Activated CD4-positive, alpha-beta T cell treated with anti-CD3 and anti-CD28 coated beads, Interleukin-2, amount 10 ng/mL, durations not matched to agents 24 days and 14 days (primary cell): ENCODE measurements at regions of chr6 and their contacts with region 1.

Region 1: GRCh38 chr6:119138906-119139541 is 60.6 kb upstream of the FAM184A start:
- DNase-seq: no peak
- H3K4me3 Mint-ChIP-seq: peak overlapping the region; percentile 46
- H3K27ac Mint-ChIP-seq: peak overlapping the region; percentile 59
- H3K4me1 Mint-ChIP-seq: peaks cover 13% of the 10 kb centered on the region
- H3K27me3 Mint-ChIP-seq: peaks cover 4% of the 10 kb centered on the region

Region 2: DNA sequence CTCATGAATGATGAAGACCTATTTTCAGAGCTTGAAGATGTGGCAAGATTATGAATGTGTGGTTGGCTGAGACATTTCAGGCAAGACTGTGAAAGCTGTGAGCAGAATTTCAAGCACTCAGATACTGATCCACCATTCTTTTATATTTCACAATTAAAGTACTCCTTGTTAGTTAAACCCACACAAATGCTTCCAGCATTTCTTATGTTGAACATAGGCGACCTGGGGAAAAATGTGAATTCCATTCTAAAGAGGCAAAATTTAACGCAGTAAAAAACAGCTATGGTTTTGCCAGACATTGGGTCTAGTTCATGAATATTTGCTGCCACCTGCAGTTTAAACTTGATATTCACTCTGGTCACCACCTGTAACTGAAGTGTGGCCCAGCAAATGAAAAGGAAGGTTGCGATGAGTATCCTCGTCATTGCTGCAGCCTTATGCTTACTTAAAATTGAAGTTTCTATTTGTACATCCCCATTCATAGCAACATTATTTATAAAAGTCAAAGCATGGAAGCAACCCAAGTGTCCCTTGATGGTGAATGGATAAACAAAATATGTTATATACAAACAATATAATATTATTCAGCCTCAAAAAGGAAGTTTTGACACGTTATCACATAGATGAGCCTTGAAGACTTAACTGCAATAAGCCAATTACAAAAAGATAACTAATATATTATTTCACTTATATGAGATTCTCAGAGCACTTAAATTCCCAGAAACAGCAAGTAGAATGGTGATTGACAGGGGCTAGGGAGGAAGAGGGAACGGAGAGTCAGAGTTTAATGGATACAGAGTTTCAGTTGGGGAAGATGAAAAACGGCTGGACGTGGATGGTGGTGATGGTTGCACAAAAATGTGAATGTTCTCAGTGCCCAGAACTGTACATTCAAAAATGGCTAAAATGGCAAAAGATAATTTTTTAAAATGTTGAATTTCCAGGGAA is 28.1 kb before region 1 on chr6:
- intact Hi-C with region 1: no loop called
- DNase-seq: peak; percentile 89
- H3K4me3 Mint-ChIP-seq: no peak overlapping the region
- H3K27ac Mint-ChIP-seq: no peak overlapping the region
- H3K4me1 Mint-ChIP-seq: peaks cover 12% of the 10 kb centered on the region
- H3K27me3 Mint-ChIP-seq: no peaks in the 10 kb centered on the region

Region 3: DNA sequence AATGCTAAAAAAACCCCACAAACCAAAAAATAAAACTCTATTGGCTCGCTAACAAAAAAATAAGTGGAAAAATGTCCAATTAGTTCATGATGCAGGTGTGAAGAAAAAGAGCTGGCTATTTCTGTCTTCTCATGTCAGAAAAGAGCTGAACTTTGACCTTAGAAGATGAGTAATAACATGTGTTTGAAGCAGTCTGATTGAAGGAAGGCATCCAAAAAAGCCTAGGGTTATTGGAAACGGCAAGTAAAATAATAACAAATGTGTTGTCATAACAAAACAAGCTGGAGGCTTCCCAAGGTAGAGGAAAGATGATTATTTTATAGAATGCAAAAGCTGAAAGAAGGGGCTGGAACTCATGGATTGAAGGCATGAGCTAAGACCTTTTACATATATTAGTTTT is 33.8 kb after region 1 on chr6:
- intact Hi-C with region 1: loop called (anchors 5 kb)
- DNase-seq: no peak
- H3K4me3 Mint-ChIP-seq: no peak overlapping the region
- H3K27ac Mint-ChIP-seq: no peak overlapping the region
- H3K4me1 Mint-ChIP-seq: no peaks in the 10 kb centered on the region
- H3K27me3 Mint-ChIP-seq: peaks cover 2% of the 10 kb centered on the region